Calu3 (cell line): ENCODE measurements at regions of chr1 and their contacts with region 1.

Region 1: GRCh38 chr1:151976858-151977257 is 16.8 kb downstream of the S100A10 start:
- DNase-seq: peak; percentile 55
- H3K4me3 Mint-ChIP-seq: no peak overlapping the region
- H3K27ac Mint-ChIP-seq: peak overlapping the region; percentile 62
- H3K4me1 Mint-ChIP-seq: peaks cover 84% of the 10 kb centered on the region
- H3K27me3 Mint-ChIP-seq: no peaks in the 10 kb centered on the region
- CTCF ChIP-seq: no peak

Region 2: GRCh38 chr1:151993654-151994496 is 17.0 kb after region 1 on chr1 and contains the start of gene S100A10:
- CTCF ChIA-PET with region 1: interaction called, 46 read pairs
- intact Hi-C with region 1: loop called (anchors 2 kb)
- DNase-seq: peak; percentile 91
- H3K4me3 Mint-ChIP-seq: peak within 1 kb of the TSS; percentile 90
- H3K27ac Mint-ChIP-seq: peak within 1 kb of the TSS; percentile 88
- H3K4me1 Mint-ChIP-seq: peaks cover 54% of the 10 kb centered on the region
- H3K27me3 Mint-ChIP-seq: no peaks in the 10 kb centered on the region
- CTCF ChIP-seq: no peak
- total RNA-seq, gene S100A10: 882 and 921 TPM in 2 replicates

Region 3: GRCh38 chr1:152034646-152035405 is 58.0 kb after region 1 on chr1:
- CTCF ChIA-PET with region 1: no interaction called
- intact Hi-C with region 1: no loop called
- DNase-seq: peak; percentile 85
- H3K4me3 Mint-ChIP-seq: peak overlapping the region; percentile 75
- H3K27ac Mint-ChIP-seq: peak overlapping the region; percentile 90
- H3K4me1 Mint-ChIP-seq: peaks cover 22% of the 10 kb centered on the region
- H3K27me3 Mint-ChIP-seq: no peaks in the 10 kb centered on the region
- CTCF ChIP-seq: peak; percentile 95

Region 4: DNA sequence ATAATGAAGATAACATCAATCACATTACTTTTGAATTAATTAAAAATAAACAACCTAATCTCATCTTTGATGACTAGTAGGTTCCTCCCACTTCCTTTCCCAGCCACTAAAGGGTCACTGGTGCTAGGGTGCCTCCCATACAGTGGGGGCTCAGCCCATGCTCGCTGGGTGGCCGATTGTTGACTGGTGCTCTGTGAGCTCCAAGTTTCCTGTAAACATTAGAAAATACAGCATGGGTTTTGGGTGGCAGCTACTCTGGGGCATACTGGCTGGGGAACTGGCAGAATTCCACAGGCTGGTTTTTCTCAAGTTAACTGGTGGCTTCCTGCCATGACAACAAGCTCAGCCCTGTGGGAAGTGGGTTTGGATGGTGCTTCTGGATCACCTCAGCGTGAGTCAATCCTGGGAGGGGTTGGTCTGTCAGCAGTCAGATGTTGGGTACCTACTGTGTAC is 465.9 kb after region 1 on chr1:
- CTCF ChIA-PET with region 1: no interaction called
- intact Hi-C with region 1: no loop called
- DNase-seq: no peak
- H3K4me3 Mint-ChIP-seq: no peak overlapping the region
- H3K27ac Mint-ChIP-seq: no peak overlapping the region
- H3K4me1 Mint-ChIP-seq: no peaks in the 10 kb centered on the region
- H3K27me3 Mint-ChIP-seq: peaks cover 72% of the 10 kb centered on the region
- CTCF ChIP-seq: no peak